Activated naive CD4-positive, alpha-beta T cell treated with anti-CD3 and anti-CD28 coated beads for 36 hours (primary cell): ENCODE measurements at regions of chr4 and their contacts with region 1.

Region 1: DNA sequence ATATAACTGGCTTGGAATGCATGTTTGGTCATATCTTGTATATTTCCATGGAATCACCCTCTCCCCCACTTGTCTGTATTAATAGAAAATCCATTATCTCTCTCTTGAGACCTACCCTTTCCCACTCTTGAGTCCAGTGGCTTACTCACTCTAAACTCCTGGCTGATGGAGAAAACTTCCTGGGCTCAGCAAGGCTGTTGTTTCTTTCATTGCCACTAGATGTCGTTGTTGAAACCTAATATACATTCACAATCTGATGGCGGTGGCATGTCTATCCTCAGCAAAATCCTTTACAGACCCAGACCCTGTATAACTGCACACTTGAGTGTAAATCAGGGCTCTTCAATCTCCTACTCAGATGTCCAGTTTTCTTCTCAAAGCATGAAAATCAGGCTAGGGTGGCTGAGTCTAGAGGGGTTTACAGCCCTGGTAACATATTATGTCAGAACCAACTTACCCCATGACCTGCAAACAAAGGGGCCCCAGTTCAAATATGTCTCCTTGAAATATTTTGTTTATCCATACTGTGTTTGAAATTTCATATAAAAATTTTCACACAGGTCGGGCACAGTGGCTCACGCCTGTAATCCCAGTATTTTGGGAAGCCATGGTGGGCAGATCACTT is 70.0 kb upstream of the FAM241A start:
- DNase-seq: peak; percentile 48
- H3K4me3 Mint-ChIP-seq: no peak overlapping the region
- H3K27ac Mint-ChIP-seq: no peak overlapping the region
- H3K4me1 Mint-ChIP-seq: no peaks in the 10 kb centered on the region
- H3K27me3 Mint-ChIP-seq: peaks cover 3% of the 10 kb centered on the region

Region 2: DNA sequence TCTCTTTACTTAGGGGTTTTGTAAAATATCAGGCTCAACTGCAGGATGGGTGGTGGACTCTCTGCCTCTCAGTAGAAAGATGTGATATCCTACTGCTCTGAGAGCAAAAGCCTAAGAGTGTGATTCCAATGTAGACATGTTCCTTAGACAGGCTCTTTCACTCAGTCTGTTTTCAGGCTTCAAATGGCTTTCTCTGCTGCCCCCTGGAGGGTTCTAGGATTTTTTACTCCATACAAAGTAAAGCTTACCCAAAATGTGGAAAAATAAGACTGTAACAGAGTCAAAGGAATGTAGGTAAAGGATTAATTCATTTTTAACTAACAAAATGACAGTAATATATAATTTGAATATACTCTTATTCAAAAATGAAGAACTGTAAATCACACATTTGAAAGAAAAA is 529.3 kb after region 1 on chr4:
- CTCF ChIA-PET with region 1: no interaction called
- intact Hi-C with region 1: loop called (anchors 1 kb)
- DNase-seq: peak; percentile 44
- H3K4me3 Mint-ChIP-seq: no peak overlapping the region
- H3K27ac Mint-ChIP-seq: no peak overlapping the region
- H3K4me1 Mint-ChIP-seq: no peaks in the 10 kb centered on the region
- H3K27me3 Mint-ChIP-seq: no peaks in the 10 kb centered on the region

Region 3: DNA sequence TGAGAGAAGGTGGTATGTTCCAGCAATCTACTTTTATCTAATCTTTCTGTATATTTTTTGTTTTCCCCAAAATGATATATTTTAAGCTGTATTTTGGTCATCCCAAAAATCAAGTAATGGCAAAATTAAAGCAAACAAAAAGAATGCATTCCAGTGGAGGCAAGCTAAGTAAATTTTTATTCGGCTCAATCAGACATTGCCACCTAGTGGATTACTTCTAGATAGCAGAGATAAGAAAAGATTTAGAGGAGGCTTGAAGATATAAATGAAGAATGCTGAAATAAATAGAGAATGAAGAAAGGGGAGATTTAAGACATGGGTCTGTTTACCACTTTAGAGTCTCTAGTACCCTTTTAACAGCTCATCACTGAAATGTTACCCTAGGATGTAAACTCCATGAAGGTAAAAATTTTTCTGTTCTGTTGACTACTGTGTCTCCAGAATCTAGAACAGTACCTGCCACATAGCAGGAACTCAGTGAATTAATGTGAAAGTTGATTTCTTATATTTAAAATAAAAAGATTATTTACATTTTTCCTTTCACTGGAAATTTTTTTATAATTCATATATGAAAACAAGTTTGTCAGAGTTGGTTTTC is 863.3 kb after region 1 on chr4:
- CTCF ChIA-PET with region 1: no interaction called
- intact Hi-C with region 1: loop called (anchors 10 kb)
- DNase-seq: no peak
- H3K4me3 Mint-ChIP-seq: no peak overlapping the region
- H3K27ac Mint-ChIP-seq: no peak overlapping the region
- H3K4me1 Mint-ChIP-seq: no peaks in the 10 kb centered on the region
- H3K27me3 Mint-ChIP-seq: peaks cover 17% of the 10 kb centered on the region